Activated B cell treated with CpG ODN at 0.5 μM for 24 hours (primary cell): ENCODE measurements at regions of chr1 and their contacts with region 1.

Region 1: DNA sequence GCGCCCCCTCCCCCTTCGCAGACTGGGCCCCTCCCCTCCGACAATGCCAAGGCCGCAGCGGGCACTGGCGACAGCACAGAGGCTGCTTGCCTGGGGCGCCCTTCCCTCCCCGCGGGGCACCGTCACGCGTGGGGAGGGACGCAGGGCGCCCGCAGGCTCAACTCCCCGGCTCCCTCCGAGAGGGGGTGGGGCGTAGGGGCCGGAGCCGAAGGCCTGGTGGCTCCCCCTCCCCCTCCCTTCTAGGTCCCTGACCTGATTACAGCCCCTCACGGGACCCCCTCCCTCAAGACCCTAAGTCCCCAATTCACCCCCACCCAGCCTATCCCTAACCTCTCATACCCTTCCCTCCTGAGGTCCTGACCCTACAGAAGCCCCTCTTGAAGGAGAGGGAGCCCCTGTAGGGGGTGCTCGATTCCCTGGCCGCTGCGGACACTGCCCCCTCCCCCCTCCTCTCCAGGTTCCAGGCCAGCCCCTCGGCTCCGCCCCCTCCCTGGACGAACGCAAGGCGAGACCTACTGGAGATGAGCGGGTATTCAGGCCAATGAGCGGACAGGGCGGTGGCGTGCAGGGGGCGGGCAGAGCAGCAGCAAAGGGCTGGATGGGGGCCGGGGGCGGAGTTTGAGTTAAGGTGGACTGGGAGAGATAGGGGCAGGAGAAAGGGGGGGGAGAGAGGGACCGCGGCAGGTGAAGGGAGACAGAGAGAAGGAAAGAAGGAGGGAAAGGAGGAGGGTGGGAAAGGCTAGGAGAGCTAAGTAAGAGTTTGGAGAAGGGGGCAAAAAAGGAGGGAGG is 733 bp upstream of the ZBTB7B start:
- DNase-seq: peak; percentile 94
- ATAC-seq: peak; percentile 81
- H3K4me3 Mint-ChIP-seq: peak overlapping the region; percentile 94
- H3K27ac Mint-ChIP-seq: peak overlapping the region; percentile 95
- H3K4me1 Mint-ChIP-seq: peaks cover 51% of the 10 kb centered on the region
- H3K27me3 Mint-ChIP-seq: no peaks in the 10 kb centered on the region
- CTCF ChIP-seq: no peak

Region 2: DNA sequence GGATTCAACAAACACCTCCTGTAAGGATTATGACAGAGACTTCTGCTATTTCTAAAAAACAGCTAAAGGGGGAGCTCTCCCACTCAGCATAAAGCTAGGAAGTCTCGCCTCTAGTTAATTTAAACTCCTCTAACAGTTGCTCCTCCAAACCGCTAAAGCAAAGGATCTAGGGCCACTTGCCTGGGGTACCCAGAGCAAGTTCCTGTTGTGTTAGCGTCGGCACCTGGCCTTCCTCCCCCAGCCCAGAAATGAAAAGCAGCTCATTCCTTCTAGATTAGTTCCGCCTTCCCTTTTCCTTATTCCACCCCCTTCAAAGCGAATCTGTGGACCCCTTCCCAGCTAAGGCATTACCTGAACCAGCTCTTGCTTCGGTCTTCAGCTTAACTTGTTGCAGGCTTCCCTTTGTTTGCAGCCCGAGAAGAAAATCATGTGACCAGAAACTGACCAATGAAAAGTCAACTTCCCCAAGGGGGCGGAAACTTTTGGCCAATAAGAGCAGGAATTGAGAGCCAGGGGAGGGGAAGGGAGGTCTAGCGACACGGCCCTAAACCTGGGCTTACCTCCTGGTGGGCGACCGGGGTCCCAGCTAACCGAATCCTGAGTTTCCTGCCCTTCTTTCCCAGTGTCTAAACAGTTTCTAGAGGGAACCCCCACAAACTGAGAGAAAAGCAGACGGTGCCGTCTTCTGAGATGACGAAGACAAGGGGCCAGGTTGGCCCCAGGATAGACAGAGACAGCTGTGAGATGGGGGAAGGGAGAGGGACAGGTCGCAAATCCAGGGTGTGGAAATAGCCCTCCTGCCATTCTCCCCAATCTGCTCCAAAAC is 45.9 kb before region 1 on chr1 and contains the start of gene PBXIP1:
- CTCF ChIA-PET with region 1: interaction called, 11 read pairs
- POLR2A ChIA-PET with region 1: interaction called, 11 read pairs
- intact Hi-C with region 1: loop called (anchors 1 kb)
- DNase-seq: peak; percentile 52
- ATAC-seq: peak; percentile 72
- H3K4me3 Mint-ChIP-seq: peak within 1 kb of the TSS; percentile 91
- H3K27ac Mint-ChIP-seq: peak within 1 kb of the TSS; percentile 93
- H3K4me1 Mint-ChIP-seq: peaks cover 81% of the 10 kb centered on the region
- H3K27me3 Mint-ChIP-seq: no peaks in the 10 kb centered on the region
- CTCF ChIP-seq: no peak
- total RNA-seq, gene PBXIP1: 42.4 and 43.2 TPM in 2 replicates

Region 3: GRCh38 chr1:154974063-154974807 is 27.6 kb before region 1 on chr1 and contains the start of gene CKS1B:
- CTCF ChIA-PET with region 1: interaction called, 14 read pairs
- POLR2A ChIA-PET with region 1: interaction called, 68 read pairs
- intact Hi-C with region 1: loop called (anchors 1 kb)
- DNase-seq: peak; percentile 87
- ATAC-seq: peak; percentile 83
- H3K4me3 Mint-ChIP-seq: no peak within 1 kb of the TSS
- H3K27ac Mint-ChIP-seq: no peak within 1 kb of the TSS
- H3K4me1 Mint-ChIP-seq: peaks cover 36% of the 10 kb centered on the region
- H3K27me3 Mint-ChIP-seq: no peaks in the 10 kb centered on the region
- CTCF ChIP-seq: no peak
- total RNA-seq, gene CKS1B: 25.3 and 26.6 TPM in 2 replicates

Region 4: DNA sequence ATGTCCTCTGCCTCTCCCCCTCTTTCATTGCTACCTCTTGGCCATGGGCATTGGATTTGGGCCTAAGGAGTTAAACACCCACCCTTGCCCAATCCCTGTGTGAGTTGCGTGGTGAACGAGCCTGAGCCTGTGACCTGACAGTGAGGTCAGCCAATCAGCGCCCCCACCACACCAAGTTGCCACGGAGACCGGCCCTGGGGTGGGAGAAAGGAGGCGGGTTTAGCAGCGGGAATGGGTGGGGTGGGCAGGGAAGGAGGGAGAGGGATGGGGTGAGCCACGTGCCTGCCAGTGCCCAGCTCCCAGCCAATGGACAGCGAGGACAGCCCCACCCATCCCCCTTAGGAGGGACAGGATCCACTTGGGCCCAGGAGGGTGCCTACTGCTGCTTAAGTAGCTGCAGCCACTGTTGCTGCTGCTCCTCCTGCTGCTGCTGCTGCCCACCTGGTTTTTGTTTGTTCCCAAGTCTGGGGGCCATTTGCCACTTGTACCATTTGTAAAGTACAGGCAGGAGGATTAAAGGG is 10.2 kb after region 1 on chr1:
- CTCF ChIA-PET with region 1: interaction called, 35 read pairs
- POLR2A ChIA-PET with region 1: interaction called, 85 read pairs
- intact Hi-C with region 1: loop called (anchors 1 kb)
- DNase-seq: no peak
- ATAC-seq: no peak
- H3K4me3 Mint-ChIP-seq: no peak overlapping the region
- H3K27ac Mint-ChIP-seq: peak overlapping the region; percentile 12
- H3K4me1 Mint-ChIP-seq: peaks cover 88% of the 10 kb centered on the region
- H3K27me3 Mint-ChIP-seq: no peaks in the 10 kb centered on the region
- CTCF ChIP-seq: no peak

Region 5: DNA sequence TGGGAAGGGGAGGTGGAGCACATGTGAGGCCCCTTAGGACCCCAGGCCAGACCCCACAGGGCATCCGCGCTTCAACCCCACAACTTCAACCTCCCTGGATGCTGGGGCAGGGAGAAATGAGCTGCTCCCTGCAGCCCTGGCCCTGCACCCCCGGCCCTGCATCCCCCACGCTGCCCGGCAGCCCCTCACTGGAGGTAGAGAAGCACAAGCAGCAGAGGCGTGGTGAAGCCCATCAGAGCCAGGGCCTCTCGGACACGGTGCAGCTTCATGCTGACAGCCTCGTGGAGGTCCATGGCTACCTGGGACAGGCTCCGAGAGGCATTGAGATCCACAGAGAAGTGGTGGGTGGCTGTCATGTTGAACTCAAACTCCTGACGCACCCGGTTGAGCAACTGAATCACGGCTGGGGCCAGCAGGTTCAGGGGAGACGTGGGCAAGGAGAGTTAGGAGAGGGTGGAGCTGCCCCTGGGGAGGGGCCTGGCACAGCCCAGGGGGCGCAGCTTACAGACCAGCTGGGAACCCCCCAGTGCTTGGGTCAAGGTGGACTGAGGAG is 28.4 kb after region 1 on chr1:
- CTCF ChIA-PET with region 1: no interaction called
- POLR2A ChIA-PET with region 1: no interaction called
- intact Hi-C with region 1: no loop called
- DNase-seq: no peak
- ATAC-seq: no peak
- H3K4me3 Mint-ChIP-seq: no peak overlapping the region
- H3K27ac Mint-ChIP-seq: no peak overlapping the region
- H3K4me1 Mint-ChIP-seq: no peaks in the 10 kb centered on the region
- H3K27me3 Mint-ChIP-seq: no peaks in the 10 kb centered on the region
- CTCF ChIP-seq: no peak

Region 6: GRCh38 chr1:155050560-155051341 is 48.9 kb after region 1 on chr1 and contains the start of gene ADAM15:
- CTCF ChIA-PET with region 1: interaction called, 11 read pairs
- POLR2A ChIA-PET with region 1: interaction called, 4 read pairs
- intact Hi-C with region 1: loop called (anchors 1 kb)
- DNase-seq: peak; percentile 78
- ATAC-seq: peak; percentile 83
- H3K4me3 Mint-ChIP-seq: peak within 1 kb of the TSS; percentile 86
- H3K27ac Mint-ChIP-seq: no peak within 1 kb of the TSS
- H3K4me1 Mint-ChIP-seq: peaks cover 22% of the 10 kb centered on the region
- H3K27me3 Mint-ChIP-seq: no peaks in the 10 kb centered on the region
- CTCF ChIP-seq: peak; percentile 56
- total RNA-seq, gene ADAM15: 11.3 and 13.7 TPM in 2 replicates

Region 7: GRCh38 chr1:155352631-155353030 is 350.8 kb after region 1 on chr1:
- CTCF ChIA-PET with region 1: no interaction called
- POLR2A ChIA-PET with region 1: no interaction called
- intact Hi-C with region 1: no loop called
- DNase-seq: no peak
- ATAC-seq: no peak
- H3K4me3 Mint-ChIP-seq: no peak overlapping the region
- H3K27ac Mint-ChIP-seq: no peak overlapping the region
- H3K4me1 Mint-ChIP-seq: no peaks in the 10 kb centered on the region
- H3K27me3 Mint-ChIP-seq: no peaks in the 10 kb centered on the region
- CTCF ChIP-seq: no peak